Adrenal gland (tissue), 19 donors: ENCODE measurements at regions of chr6 and their contacts with region 1.

Region 1: GRCh38 chr6:116279260-116280063 is at the start of gene TSPYL1:
- DNase-seq: peak; percentile 96 to 99 (median 98)
- H3K4me3 ChIP-seq: peak within 1 kb of the TSS; percentile 4 to 96 (median 88)
- H3K27ac ChIP-seq: peak within 1 kb of the TSS; percentile 94 to 100 (median 99)
- H3K4me1 ChIP-seq: peaks cover 15 to 61% of the 10 kb centered on the region in 2 donors
- H3K27me3 ChIP-seq: no peaks in the 10 kb centered on the region
- CTCF ChIP-seq: no peak
- POLR2A ChIP-seq: peak; percentile 99 to 100
- total RNA-seq, gene TSPYL1: 99.9 to 271 (median 204) TPM

Region 2: DNA sequence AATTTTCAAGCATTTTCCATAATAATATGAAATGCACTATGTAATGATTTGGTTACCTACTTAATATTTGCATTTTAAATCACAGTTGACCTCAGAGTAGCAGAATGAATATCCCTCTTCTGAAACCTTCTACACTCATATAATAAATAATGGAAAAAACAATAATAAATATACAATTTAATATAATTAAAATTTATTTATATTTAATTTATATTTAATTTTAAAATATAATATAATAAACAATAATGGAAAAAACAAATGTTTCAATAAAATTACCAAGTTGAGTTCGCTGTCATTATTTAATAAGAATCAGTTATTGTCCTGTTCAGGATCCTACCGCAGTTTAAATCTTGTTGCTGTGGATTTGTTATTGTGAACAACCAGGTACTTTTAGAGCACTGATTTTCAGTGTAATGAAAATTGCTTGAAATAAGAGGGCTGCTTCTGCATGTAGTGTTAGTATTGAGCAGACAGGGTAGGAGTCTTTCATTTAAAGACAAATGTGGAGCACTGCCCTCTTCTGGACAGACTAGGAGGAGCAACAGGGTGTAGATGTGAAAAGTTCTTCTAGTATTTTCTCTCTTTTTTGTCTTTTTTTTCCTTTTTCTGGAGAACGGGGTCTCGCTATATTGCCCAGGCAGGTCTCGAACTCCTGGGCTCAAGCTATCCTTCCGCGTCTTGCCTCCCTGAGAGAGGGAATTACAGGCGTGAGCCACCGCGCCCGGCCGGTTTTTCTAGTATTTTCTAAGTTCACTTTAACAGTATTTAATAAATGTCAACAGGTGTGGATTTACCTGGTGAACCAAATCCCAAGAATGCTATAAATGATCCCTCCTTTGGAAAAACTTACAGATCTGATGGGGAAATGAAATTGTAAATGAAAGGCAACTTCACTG is 252.5 kb after region 1 on chr6:
- intact Hi-C with region 1: loop called (anchors 10 kb)
- DNase-seq: peak; percentile 45 to 83 (median 65)
- H3K4me3 ChIP-seq: no peak overlapping the region
- H3K27ac ChIP-seq: no peak overlapping the region
- H3K4me1 ChIP-seq: no peaks in the 10 kb centered on the region
- H3K27me3 ChIP-seq: no peaks in the 10 kb centered on the region
- CTCF ChIP-seq: peak; percentile 75 to 94 (median 84)
- POLR2A ChIP-seq: no peak

Region 3: GRCh38 chr6:116561377-116562018 is 282.0 kb after region 1 on chr6:
- intact Hi-C with region 1: loop called in 1 of 2 experiments (anchors 10 kb)
- DNase-seq: peak; percentile 61 to 95 (median 80)
- H3K4me3 ChIP-seq: no peak overlapping the region
- H3K27ac ChIP-seq: no peak overlapping the region
- H3K4me1 ChIP-seq: peaks cover 0 to 18% of the 10 kb centered on the region in 2 donors
- H3K27me3 ChIP-seq: no peaks in the 10 kb centered on the region
- CTCF ChIP-seq: peak; percentile 84 to 94 (median 92)
- POLR2A ChIP-seq: no peak